ENCODE measurements at regions of chr10 and their contacts with region 1.

Region 1: GRCh38 chr10:95363303-95363912 is 72.6 kb upstream of the PDLIM1 start:
- DNase-seq: peak; percentile 77
- ATAC-seq: peak; percentile 79
- H3K4me3 ChIP-seq: no peak overlapping the region
- H3K27ac ChIP-seq: no peak overlapping the region
- H3K4me1 ChIP-seq: no peaks in the 10 kb centered on the region
- H3K27me3 ChIP-seq: peaks cover 3% of the 10 kb centered on the region
- CTCF ChIP-seq: peak; percentile 94
- POLR2A ChIP-seq: peak; percentile 41; the same call in 1 of the 2 replicates
- RAD21 ChIP-seq: peak; percentile 99

Region 2: GRCh38 chr10:95183271-95184230 is 179.9 kb before region 1 on chr10:
- CTCF ChIA-PET with region 1: interaction called, 4 read pairs
- POLR2A ChIA-PET with region 1: no interaction called
- dilution Hi-C with region 1: no loop called
- in situ Hi-C with region 1: loop called (anchors 5 kb)
- intact Hi-C with region 1: loop called (anchors 1 kb)
- DNase-seq: peak; percentile 71
- ATAC-seq: peak; percentile 98
- H3K4me3 ChIP-seq: peak overlapping the region; percentile 65
- H3K27ac ChIP-seq: peak overlapping the region; percentile 48; the same call in 1 of the 2 replicates
- H3K4me1 ChIP-seq: no peaks in the 10 kb centered on the region
- H3K27me3 ChIP-seq: peaks cover 2% of the 10 kb centered on the region
- CTCF ChIP-seq: peak; percentile 94
- POLR2A ChIP-seq: no peak
- RAD21 ChIP-seq: peak; percentile 76

Region 3: DNA sequence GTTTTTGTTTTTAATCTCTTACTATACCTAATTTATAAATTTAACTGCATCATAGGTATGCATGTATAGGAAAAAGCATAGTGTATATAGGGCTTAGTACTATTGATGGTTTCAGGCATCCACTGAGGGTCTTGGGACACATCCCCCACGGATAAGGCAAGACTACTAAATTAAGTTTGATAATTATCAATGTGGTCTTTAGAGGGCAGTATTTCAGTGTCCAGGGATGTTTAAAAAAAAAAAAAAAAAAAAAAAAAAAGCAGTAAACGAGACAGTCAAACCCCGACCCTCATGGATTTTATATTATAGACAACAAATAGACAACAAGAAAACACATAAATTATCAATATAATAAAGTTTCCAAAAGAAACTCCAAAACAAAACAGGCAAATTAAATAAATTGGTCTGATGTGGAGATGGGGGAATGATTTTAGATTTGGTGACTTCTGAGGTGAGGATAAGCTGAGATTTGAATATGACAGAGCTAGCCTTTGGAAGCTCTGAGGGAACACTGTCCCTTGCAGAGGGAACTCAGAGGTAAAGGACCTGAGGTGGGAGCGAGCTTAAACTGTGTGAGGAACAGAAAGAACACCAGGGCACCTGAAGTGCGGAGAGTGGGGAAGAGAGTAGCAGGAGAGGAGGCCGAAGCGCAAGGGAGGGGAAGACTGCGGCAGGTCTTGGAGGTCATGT is 154.6 kb before region 1 on chr10:
- CTCF ChIA-PET with region 1: interaction called, 4 read pairs
- POLR2A ChIA-PET with region 1: interaction called, 7 read pairs
- dilution Hi-C with region 1: no loop called
- in situ Hi-C with region 1: no loop called
- intact Hi-C with region 1: loop called (anchors 2 kb)
- DNase-seq: no peak
- ATAC-seq: peak; percentile 59; the same call in 1 of the 2 replicates
- H3K4me3 ChIP-seq: no peak overlapping the region
- H3K27ac ChIP-seq: no peak overlapping the region
- H3K4me1 ChIP-seq: peaks cover 3% of the 10 kb centered on the region; the same call in 1 of the 2 replicates
- H3K27me3 ChIP-seq: no peaks in the 10 kb centered on the region
- CTCF ChIP-seq: peak; percentile 55
- POLR2A ChIP-seq: no peak
- RAD21 ChIP-seq: peak; percentile 47

Region 4: DNA sequence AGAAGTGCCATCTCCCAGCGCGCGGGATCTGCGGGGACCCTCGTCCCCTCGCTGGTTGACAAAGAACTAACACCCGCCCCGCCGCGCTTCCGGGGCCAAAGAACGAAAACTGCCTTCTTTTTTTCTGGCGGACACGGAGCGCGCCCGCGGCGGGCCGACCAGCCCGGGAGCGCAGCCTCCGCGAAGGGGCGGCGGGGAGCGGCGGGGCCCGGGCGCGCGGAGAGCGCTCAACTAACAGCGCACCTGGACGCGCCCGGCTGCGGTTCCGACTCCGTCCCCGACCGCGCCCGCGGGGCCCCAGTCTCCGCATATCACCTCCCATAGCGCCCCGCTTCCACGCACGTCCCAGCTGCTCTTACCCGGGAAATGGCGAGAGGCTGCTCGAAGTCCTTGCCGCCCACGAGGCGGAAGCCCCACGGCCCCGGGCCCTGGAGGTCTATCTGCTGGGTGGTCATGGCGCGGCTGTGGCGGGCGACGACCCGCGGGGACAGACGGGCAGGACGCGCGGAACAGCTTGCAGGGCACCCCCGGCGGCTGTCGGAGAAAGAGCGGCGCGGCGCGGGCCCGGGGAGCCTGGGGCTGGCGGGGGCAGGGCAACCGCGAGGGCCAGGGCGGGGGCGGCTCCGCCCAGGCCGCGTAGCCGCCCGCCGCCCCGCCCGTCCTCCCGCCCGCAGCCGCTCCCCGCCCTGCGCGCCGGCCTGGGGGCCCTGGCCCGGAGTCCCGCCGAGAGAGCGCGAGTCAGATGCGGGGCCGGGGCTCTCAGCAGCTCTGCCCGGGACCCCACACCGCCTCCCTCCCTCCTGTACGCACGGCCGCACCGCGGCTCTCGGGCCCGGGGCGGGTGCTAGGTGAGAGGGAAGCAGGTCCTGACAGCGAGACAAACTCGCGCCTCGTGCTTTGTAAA is 72.7 kb before region 1 on chr10 and contains the start of gene PDLIM1:
- CTCF ChIA-PET with region 1: interaction called, 6 read pairs
- POLR2A ChIA-PET with region 1: no interaction called
- dilution Hi-C with region 1: no loop called
- in situ Hi-C with region 1: no loop called
- intact Hi-C with region 1: loop called (anchors 1 kb)
- DNase-seq: peak; percentile 45
- ATAC-seq: peak; percentile 88
- H3K4me3 ChIP-seq: peak within 1 kb of the TSS; percentile 98
- H3K27ac ChIP-seq: peak within 1 kb of the TSS; percentile 94
- H3K4me1 ChIP-seq: peaks cover 15% of the 10 kb centered on the region
- H3K27me3 ChIP-seq: no peaks in the 10 kb centered on the region
- CTCF ChIP-seq: peak; percentile 30
- POLR2A ChIP-seq: peak; percentile 80
- RAD21 ChIP-seq: no peak
- total RNA-seq, gene PDLIM1: 27.5 and 30.1 TPM in 2 replicates

Measured in IMR-90 (cell line).